CD4-positive, alpha-beta memory T cell (primary cell): ENCODE measurements at regions of chr2 and their contacts with region 1.

Region 1: DNA sequence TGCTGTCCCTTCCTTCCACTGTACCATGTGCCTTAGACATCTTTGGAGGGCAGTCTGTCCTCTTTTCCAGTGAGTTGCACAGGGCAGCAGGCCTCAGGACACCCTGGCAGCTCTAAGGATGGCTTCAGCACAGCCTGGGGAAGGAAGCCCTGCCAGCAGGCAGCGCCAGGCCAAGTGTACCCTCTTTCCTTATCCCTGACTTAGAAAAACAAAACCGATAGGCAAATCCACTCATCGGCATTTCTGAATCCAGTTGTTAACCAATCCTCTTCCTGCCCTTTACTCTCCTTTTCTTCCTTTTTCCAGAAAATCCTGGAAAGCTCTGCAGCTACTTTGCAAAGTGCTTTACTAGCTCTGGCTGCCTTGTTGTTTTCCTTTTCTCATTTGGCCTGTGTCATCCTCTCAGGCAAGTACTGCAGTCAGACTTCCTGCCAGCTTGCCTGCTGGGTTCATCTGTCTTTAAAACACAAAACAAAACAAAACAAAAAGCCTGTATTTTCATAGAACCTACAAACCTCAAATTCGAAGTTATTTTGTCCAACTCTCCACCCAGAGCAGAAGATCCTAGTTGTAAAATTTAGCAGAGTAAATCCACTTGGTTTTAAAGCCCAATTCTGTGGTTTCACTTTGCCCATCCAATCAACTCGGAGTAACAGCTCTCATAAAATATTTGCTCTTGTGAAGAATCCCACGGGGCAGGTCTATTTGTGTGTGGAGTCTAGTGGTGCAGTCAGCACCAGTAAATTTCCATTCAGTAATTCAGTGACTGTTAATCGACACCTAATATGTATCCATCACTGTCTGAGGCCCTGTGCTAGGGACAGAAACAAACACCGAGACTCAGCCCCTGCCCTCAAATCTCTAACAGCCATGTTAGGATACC is 45.2 kb downstream of the PCBP1 start:
- DNase-seq: peak; percentile 52 to 72 (median 63)
- H3K4me3 ChIP-seq: peak overlapping the region; percentile 24 to 55
- H3K4me3 Mint-ChIP-seq: peak overlapping the region; percentile 81 to 92 (median 86)
- H3K27ac ChIP-seq: peak overlapping the region; percentile 83
- H3K27ac Mint-ChIP-seq: peak overlapping the region; percentile 92 to 100 (median 97)
- H3K4me1 ChIP-seq: peaks cover 87% of the 10 kb centered on the region
- H3K4me1 Mint-ChIP-seq: peaks cover 54 to 88% (median 66%) of the 10 kb centered on the region in 4 donors
- H3K27me3 ChIP-seq: no peaks in the 10 kb centered on the region
- H3K27me3 Mint-ChIP-seq: no peaks in the 10 kb centered on the region

Region 2: DNA sequence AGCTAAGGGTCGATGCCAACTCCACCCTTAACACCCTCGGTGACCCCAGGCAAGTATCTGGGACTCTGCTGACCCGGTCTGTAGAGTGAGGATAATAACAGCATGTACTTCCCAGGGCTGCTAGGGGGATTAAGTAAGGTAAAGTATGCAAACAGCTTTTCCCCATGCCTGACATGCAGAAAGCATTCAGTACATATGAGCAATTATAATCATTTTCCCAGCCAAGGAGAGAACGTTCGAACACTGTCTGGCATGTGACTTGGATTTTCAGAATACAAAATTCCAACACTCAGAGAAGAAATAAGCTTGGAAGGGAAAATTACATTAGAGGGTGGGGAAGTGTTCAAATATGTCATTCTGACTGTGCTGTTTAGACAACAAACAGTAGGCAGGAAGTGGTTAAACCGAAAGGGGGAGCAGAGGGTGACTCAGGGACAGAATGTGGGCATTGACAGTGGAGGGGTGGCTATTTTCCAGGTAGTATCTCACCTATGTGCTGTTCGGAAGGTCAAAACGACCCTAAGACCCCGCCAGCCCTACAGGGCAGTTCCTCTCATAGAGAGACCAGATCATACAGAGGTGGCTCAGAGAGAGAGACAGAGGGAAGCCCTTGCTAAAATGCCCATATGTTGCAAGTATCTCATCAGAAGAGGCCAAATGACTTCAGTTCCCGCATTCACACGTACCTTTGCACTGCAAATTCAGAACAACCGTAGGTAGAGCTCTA is 186.0 kb before region 1 on chr2:
- CTCF ChIA-PET with region 1: no interaction called
- POLR2A ChIA-PET with region 1: interaction called, 14 read pairs
- intact Hi-C with region 1: no loop called
- DNase-seq: peak; percentile 50 to 79 (median 64)
- H3K4me3 ChIP-seq: peak overlapping the region in 1 of 2 donors; percentile 21
- H3K4me3 Mint-ChIP-seq: peak overlapping the region in 7 of 8 donors; percentile 47 to 82 (median 64)
- H3K27ac ChIP-seq: peak overlapping the region; percentile 39
- H3K27ac Mint-ChIP-seq: peak overlapping the region; percentile 87 to 96 (median 90)
- H3K4me1 ChIP-seq: peaks cover 26% of the 10 kb centered on the region
- H3K4me1 Mint-ChIP-seq: peaks cover 24 to 36% (median 31%) of the 10 kb centered on the region in 4 donors
- H3K27me3 ChIP-seq: no peaks in the 10 kb centered on the region
- H3K27me3 Mint-ChIP-seq: no peaks in the 10 kb centered on the region

Region 3: GRCh38 chr2:70070541-70071268 is 61.8 kb before region 1 on chr2:
- CTCF ChIA-PET with region 1: interaction called, 32 read pairs
- POLR2A ChIA-PET with region 1: interaction called, 2,231 read pairs
- intact Hi-C with region 1: no loop called
- DNase-seq: peak; percentile 75 to 81 (median 79)
- H3K4me3 ChIP-seq: peak overlapping the region in 1 of 2 donors; percentile 1
- H3K4me3 Mint-ChIP-seq: peak overlapping the region; percentile 67 to 91 (median 80)
- H3K27ac ChIP-seq: peak overlapping the region; percentile 82
- H3K27ac Mint-ChIP-seq: peak overlapping the region; percentile 81 to 99 (median 98)
- H3K4me1 ChIP-seq: peaks cover 39% of the 10 kb centered on the region
- H3K4me1 Mint-ChIP-seq: peaks cover 36 to 55% (median 46%) of the 10 kb centered on the region in 4 donors
- H3K27me3 ChIP-seq: no peaks in the 10 kb centered on the region
- H3K27me3 Mint-ChIP-seq: no peaks in the 10 kb centered on the region

Region 4: GRCh38 chr2:70094978-70095719 is 37.3 kb before region 1 on chr2:
- CTCF ChIA-PET with region 1: interaction called, 15 read pairs
- POLR2A ChIA-PET with region 1: interaction called, 2,231 read pairs
- intact Hi-C with region 1: loop called (anchors 1 kb)
- DNase-seq: peak; percentile 69 to 77 (median 74)
- H3K4me3 ChIP-seq: peak overlapping the region; percentile 2 to 23
- H3K4me3 Mint-ChIP-seq: peak overlapping the region; percentile 78 to 90 (median 84)
- H3K27ac ChIP-seq: peak overlapping the region; percentile 76
- H3K27ac Mint-ChIP-seq: peak overlapping the region; percentile 85 to 100 (median 97)
- H3K4me1 ChIP-seq: peaks cover 44% of the 10 kb centered on the region
- H3K4me1 Mint-ChIP-seq: peaks cover 36 to 55% (median 43%) of the 10 kb centered on the region in 4 donors
- H3K27me3 ChIP-seq: no peaks in the 10 kb centered on the region
- H3K27me3 Mint-ChIP-seq: no peaks in the 10 kb centered on the region

Region 5: DNA sequence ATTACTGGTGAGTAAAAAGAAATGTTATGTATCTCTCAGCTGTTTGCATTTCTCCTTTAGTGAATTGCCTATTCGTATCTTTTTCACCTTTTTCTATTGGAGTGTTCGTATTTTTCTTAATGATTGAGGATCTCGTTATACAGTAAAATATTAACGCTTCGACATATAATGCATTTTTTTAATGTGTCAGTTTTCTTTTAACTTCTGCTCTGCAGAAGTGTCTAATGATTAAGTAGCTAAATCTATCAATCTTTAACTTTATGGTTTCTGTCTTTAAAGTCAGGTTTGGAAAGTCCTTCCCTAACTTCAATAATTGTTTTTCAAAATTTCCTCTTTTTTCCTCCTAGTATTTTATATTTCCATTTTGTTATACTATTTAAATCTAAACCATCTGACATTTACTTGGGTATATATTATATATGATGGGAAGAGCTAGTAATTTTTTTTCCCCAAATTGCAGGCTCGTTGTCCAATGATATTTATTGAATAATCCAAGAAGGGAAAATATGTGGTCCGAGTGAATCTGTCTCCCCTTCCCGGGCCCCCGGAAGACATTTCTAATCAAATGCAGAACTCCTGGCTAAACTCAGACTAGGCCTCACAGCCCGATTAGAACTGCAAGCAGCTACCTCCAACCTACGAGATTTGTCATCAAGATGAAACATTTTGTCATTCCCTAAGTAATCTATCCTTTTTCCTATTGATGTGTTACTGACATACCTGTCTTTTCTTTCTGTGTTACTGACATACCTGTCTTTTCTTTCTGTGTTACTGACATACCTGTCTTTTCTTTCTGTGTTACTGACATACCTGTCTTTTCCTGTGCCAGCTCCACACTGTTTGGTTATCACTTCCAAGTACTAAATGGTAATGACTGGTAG is 28.0 kb before region 1 on chr2:
- CTCF ChIA-PET with region 1: interaction called, 10 read pairs
- POLR2A ChIA-PET with region 1: interaction called, 245 read pairs
- intact Hi-C with region 1: no loop called
- DNase-seq: peak in 2 of 5 donors; percentile 32
- H3K4me3 ChIP-seq: peak overlapping the region in 1 of 2 donors; percentile 23
- H3K4me3 Mint-ChIP-seq: peak overlapping the region; percentile 62 to 82 (median 78)
- H3K27ac ChIP-seq: peak overlapping the region; percentile 57
- H3K27ac Mint-ChIP-seq: peak overlapping the region; percentile 87 to 95 (median 94)
- H3K4me1 ChIP-seq: peaks cover 47% of the 10 kb centered on the region
- H3K4me1 Mint-ChIP-seq: peaks cover 31 to 61% (median 46%) of the 10 kb centered on the region in 4 donors
- H3K27me3 ChIP-seq: no peaks in the 10 kb centered on the region
- H3K27me3 Mint-ChIP-seq: no peaks in the 10 kb centered on the region

Region 6: GRCh38 chr2:70115646-70116442 is 16.6 kb before region 1 on chr2:
- CTCF ChIA-PET with region 1: interaction called, 5 read pairs
- POLR2A ChIA-PET with region 1: interaction called, 719 read pairs
- intact Hi-C with region 1: no loop called
- DNase-seq: no peak
- H3K4me3 ChIP-seq: no peak overlapping the region
- H3K4me3 Mint-ChIP-seq: no peak overlapping the region
- H3K27ac ChIP-seq: no peak overlapping the region
- H3K27ac Mint-ChIP-seq: peak overlapping the region in 1 of 7 donors; percentile 4
- H3K4me1 ChIP-seq: peaks cover 40% of the 10 kb centered on the region
- H3K4me1 Mint-ChIP-seq: peaks cover 21 to 37% (median 28%) of the 10 kb centered on the region in 4 donors
- H3K27me3 ChIP-seq: no peaks in the 10 kb centered on the region
- H3K27me3 Mint-ChIP-seq: no peaks in the 10 kb centered on the region

Region 7: GRCh38 chr2:70806013-70806412 is 673.5 kb after region 1 on chr2:
- CTCF ChIA-PET with region 1: no interaction called
- POLR2A ChIA-PET with region 1: no interaction called
- intact Hi-C with region 1: no loop called
- DNase-seq: no peak
- H3K4me3 ChIP-seq: no peak overlapping the region
- H3K4me3 Mint-ChIP-seq: no peak overlapping the region
- H3K27ac ChIP-seq: no peak overlapping the region
- H3K27ac Mint-ChIP-seq: no peak overlapping the region
- H3K4me1 ChIP-seq: no peaks in the 10 kb centered on the region
- H3K4me1 Mint-ChIP-seq: peaks cover 0 to 1% (median 0%) of the 10 kb centered on the region in 4 donors
- H3K27me3 ChIP-seq: no peaks in the 10 kb centered on the region
- H3K27me3 Mint-ChIP-seq: peaks cover 2 to 5% of the 10 kb centered on the region in 2 donors